Left ventricle myocardium inferior (tissue), 1 donor: ENCODE measurements at regions of chr15 and their contacts with region 1.

Region 1: DNA sequence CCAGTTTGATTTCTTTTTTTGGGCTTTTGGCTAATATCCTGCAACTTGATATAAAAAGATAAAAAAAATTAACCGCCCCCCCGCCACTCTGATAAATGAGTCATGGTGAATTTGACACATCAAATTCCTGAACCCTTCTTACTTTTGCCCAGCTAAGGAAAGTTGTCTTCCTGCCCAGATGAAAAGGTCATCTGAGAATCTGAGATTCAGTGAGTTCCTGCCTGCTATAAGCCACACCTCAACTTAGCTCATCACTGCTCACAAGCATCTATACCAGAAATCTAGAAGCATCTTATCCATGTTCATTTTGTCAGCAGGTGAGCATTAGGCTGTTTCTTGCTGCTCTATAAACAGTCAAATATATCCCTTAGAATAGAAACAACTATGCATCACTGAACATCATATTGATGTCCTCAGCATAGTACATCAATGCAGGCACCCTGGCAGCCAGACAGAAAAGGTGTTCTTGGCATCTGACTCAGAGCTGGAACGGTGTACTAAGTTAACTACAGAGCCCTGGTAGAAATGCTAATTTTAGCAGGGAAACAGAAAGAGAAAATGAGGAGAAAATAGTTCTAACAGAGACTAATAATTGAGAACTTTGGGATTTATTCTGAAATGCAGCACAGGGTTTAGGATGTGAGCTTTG is 77.1 kb downstream of the SEMA6D start:
- DNase-seq: no peak
- H3K4me3 ChIP-seq: no peak overlapping the region
- H3K27ac ChIP-seq: no peak overlapping the region
- H3K4me1 ChIP-seq: peaks cover 32% of the 10 kb centered on the region
- H3K27me3 ChIP-seq: no peaks in the 10 kb centered on the region
- CTCF ChIP-seq: no peak

Region 2: GRCh38 chr15:47717036-47717611 is 77.3 kb before region 1 on chr15 and contains the start of gene SEMA6D:
- intact Hi-C with region 1: no loop called
- DNase-seq: peak; percentile 75
- H3K4me3 ChIP-seq: peak within 1 kb of the TSS; percentile 94
- H3K27ac ChIP-seq: peak within 1 kb of the TSS; percentile 91
- H3K4me1 ChIP-seq: peaks cover 60% of the 10 kb centered on the region
- H3K27me3 ChIP-seq: no peaks in the 10 kb centered on the region
- CTCF ChIP-seq: peak; percentile 70
- total RNA-seq, gene SEMA6D: 12.4 TPM

Region 3: DNA sequence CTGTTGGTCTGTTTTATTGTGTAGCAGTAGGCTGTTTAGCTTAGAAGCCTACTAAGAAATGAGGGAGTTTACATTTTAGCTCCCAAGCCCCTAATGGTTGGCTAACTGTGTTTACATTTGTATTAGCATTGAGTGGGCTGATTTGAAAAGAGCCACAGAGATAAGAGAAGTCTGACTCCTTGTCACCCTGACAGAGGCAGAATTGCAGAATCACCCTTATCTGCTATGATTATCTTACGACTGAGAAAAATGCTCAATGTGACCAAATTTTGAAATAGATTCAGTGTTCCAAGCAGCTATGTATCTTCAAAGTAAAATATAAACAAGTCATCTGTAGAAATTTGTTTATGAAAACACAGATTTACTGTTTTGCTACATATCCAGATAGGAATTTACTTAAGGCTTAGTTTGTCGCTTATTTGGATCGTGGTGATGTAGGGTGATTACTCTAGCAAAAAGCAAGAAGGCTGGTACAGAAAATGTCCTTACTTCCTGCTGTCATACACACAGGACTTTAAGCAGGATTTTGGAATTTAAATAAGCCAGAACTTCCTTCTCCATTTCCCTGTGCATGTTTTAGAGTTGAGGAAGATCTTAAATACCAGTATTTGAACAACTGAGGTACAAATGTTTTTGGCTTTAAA is 58.1 kb before region 1 on chr15:
- intact Hi-C with region 1: loop called (anchors 10 kb)
- DNase-seq: no peak
- H3K4me3 ChIP-seq: peak overlapping the region; percentile 36
- H3K27ac ChIP-seq: peak overlapping the region; percentile 90
- H3K4me1 ChIP-seq: peaks cover 76% of the 10 kb centered on the region
- H3K27me3 ChIP-seq: no peaks in the 10 kb centered on the region
- CTCF ChIP-seq: no peak

Region 4: GRCh38 chr15:47820780-47821319 is 26.5 kb after region 1 on chr15:
- intact Hi-C with region 1: no loop called
- DNase-seq: no peak
- H3K4me3 ChIP-seq: peak overlapping the region; percentile 21
- H3K27ac ChIP-seq: no peak overlapping the region
- H3K4me1 ChIP-seq: peaks cover 20% of the 10 kb centered on the region
- H3K27me3 ChIP-seq: no peaks in the 10 kb centered on the region
- CTCF ChIP-seq: no peak

Region 5: GRCh38 chr15:47846876-47847275 is 52.5 kb after region 1 on chr15:
- intact Hi-C with region 1: no loop called
- DNase-seq: no peak
- H3K4me3 ChIP-seq: no peak overlapping the region
- H3K27ac ChIP-seq: no peak overlapping the region
- H3K4me1 ChIP-seq: no peaks in the 10 kb centered on the region
- H3K27me3 ChIP-seq: no peaks in the 10 kb centered on the region
- CTCF ChIP-seq: no peak

Region 6: DNA sequence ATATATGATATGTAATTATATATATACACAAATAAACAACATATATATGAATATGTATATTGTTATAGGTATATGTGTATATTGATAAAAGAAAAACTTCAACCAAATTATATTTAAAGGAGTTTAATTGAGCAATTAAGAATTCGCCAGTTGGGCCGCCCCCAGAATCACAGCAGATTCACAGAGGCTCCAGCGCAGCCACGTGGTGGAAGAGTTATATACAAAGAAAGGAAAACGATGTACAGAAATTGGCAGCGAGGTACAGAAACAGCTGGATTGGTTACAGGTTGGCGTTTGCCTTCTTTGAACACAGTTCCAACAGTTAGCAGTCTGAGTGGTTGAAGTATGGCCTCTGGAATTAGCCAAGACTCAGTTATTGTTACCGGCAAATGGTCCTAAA is 189.1 kb after region 1 on chr15:
- intact Hi-C with region 1: no loop called
- DNase-seq: no peak
- H3K4me3 ChIP-seq: no peak overlapping the region
- H3K27ac ChIP-seq: no peak overlapping the region
- H3K4me1 ChIP-seq: no peaks in the 10 kb centered on the region
- H3K27me3 ChIP-seq: no peaks in the 10 kb centered on the region
- CTCF ChIP-seq: no peak